ENCODE measurements at regions of chr15 and their contacts with region 1.

Region 1: GRCh38 chr15:45790325-45790943 is 155.6 kb downstream of the SQOR start:
- DNase-seq: peak; percentile 49
- H3K4me3 ChIP-seq: no peak overlapping the region
- H3K27ac ChIP-seq: no peak overlapping the region
- H3K4me1 ChIP-seq: no peaks in the 10 kb centered on the region
- H3K27me3 ChIP-seq: no peaks in the 10 kb centered on the region
- CTCF ChIP-seq: peak; percentile 76

Region 2: DNA sequence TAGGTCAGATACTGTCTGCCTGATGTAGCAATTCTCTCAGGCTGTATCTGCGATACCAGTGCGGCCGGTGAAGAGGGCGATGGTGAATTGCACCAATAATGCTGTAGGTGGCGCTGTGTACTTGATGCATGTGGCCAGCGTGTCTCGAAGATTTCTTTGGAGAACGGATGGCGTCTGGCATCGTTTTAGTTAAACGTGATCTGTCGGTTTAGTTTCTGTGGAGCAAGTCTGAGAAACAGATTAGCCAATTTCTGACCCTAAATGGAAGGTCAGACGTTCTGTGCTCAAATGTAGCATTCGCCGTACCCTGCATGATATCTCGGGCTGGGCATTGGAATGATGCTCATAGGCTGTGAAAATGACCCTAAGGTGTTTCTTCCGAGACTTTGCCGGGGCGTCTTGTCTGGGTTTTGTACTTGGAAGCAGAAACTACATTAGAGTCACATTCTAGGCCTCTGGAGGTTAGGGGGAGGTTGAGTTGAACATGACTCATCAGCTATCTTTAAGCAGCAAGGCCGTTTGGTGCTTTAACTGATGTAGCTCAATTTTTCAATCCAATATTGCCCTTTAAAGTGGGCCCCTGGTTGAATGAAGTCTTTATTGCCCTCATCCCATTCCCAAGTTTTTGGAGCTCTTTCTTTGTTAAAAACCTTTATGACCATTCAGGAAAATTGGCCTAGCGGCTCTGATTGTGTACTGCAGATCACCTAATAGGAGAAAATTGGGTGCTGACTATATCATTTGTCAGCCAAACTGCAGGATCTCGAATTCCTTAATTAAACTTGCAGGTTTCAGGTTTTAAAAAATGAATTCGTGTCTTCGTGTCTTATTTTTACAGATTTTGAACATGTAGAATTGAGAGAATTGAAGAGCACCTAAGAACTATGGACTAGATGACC is 75.6 kb before region 1 on chr15:
- CTCF ChIA-PET with region 1: no interaction called
- POLR2A ChIA-PET with region 1: no interaction called
- intact Hi-C with region 1: loop called (anchors 1 kb)
- DNase-seq: peak; percentile 81
- H3K4me3 ChIP-seq: no peak overlapping the region
- H3K27ac ChIP-seq: no peak overlapping the region
- H3K4me1 ChIP-seq: no peaks in the 10 kb centered on the region
- H3K27me3 ChIP-seq: no peaks in the 10 kb centered on the region
- CTCF ChIP-seq: peak; percentile 97

Region 3: DNA sequence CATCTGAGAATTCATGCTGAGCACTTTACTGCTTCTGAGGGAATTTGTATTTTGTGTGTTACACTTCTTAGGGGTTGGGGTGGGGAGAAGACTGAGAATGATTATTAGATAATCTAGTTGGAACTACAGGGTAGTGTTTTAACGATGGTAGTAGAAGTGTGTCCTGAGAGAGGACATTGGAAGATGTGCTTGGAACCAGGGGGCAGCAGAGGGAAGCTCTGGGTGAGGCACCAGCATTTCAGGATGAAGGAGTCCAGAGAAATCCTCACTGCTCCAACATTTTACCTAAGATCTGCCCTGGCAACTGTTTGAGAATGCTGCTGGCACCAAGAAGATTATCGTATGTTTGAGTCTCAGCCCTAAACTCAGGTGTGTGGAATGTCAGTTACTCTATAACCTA is 10.1 kb before region 1 on chr15:
- CTCF ChIA-PET with region 1: no interaction called
- POLR2A ChIA-PET with region 1: no interaction called
- intact Hi-C with region 1: no loop called
- DNase-seq: no peak
- H3K4me3 ChIP-seq: no peak overlapping the region
- H3K27ac ChIP-seq: no peak overlapping the region
- H3K4me1 ChIP-seq: no peaks in the 10 kb centered on the region
- H3K27me3 ChIP-seq: peaks cover 4% of the 10 kb centered on the region
- CTCF ChIP-seq: peak; percentile 18; the same call in 1 of the 2 replicates

Region 4: GRCh38 chr15:45884755-45885445 is 94.5 kb after region 1 on chr15:
- CTCF ChIA-PET with region 1: no interaction called
- POLR2A ChIA-PET with region 1: no interaction called
- intact Hi-C with region 1: no loop called
- DNase-seq: no peak
- H3K4me3 ChIP-seq: no peak overlapping the region
- H3K27ac ChIP-seq: no peak overlapping the region
- H3K4me1 ChIP-seq: no peaks in the 10 kb centered on the region
- H3K27me3 ChIP-seq: no peaks in the 10 kb centered on the region
- CTCF ChIP-seq: no peak

Region 5: DNA sequence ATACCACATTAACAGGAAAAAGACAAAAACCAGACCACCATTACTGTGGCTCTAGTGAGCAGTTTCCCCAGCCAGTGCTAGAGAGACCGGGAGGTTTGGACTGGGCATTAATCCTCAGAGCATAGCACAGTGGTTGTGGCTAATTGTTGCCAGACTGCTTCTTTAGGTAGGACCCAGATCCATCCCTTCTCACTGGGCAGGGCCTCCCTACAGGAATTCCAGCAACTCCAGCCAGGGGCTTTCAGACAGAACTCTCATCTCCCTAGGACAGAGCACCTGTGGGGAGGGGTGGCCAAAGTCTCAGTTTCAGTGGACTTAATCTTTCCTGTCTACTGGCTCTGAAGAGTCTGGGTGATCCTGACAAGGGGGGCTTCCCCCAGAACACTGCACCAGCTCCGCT is 604.0 kb after region 1 on chr15:
- CTCF ChIA-PET with region 1: no interaction called
- POLR2A ChIA-PET with region 1: no interaction called
- intact Hi-C with region 1: no loop called
- DNase-seq: no peak
- H3K4me3 ChIP-seq: no peak overlapping the region
- H3K27ac ChIP-seq: no peak overlapping the region
- H3K4me1 ChIP-seq: no peaks in the 10 kb centered on the region
- H3K27me3 ChIP-seq: no peaks in the 10 kb centered on the region
- CTCF ChIP-seq: no peak

Measured in A673 (cell line).